ENCODE measurements at regions of chr14 and their contacts with region 1.

Region 1: DNA sequence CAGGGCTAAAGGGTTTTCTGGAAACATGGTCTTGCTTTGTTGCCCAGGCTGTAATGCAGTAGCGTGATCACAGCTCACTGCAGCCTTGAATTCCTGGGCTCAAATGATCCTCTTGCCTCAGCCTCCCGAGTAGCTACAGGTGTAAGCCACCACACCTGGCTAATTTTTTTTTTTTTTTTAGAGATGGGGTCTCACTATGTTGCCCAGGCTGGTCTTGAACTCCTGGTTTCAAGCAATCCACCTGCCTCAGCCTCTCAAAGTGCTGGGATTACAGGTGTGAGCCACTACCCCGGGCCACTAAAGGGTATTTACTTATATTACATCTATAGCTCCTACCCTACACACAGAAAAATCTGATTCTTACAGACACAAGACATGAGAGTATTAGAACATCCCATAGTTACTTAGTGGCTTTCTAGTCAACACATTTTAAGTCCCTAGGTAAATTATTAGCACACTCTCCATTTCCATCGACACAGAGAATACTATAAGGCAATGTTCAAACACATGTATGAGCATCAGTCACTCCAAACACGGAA is 6.2 kb upstream of the DCAF11 start:
- DNase-seq: no peak
- H3K4me3 ChIP-seq: no peak overlapping the region
- H3K4me3 Mint-ChIP-seq: peak overlapping the region in 2 of 7 donors; percentile 4 to 56
- H3K27ac ChIP-seq: no peak overlapping the region
- H3K27ac Mint-ChIP-seq: peak overlapping the region; percentile 79 to 97 (median 94)
- H3K4me1 ChIP-seq: peaks cover 15% of the 10 kb centered on the region
- H3K4me1 Mint-ChIP-seq: peaks cover 9 to 14% (median 10%) of the 10 kb centered on the region in 3 donors
- H3K27me3 ChIP-seq: no peaks in the 10 kb centered on the region
- H3K27me3 Mint-ChIP-seq: no peaks in the 10 kb centered on the region

Region 2: GRCh38 chr14:23776288-23776687 is 332.1 kb before region 1 on chr14:
- CTCF ChIA-PET with region 1: no interaction called
- POLR2A ChIA-PET with region 1: no interaction called
- DNase-seq: no peak
- H3K4me3 ChIP-seq: no peak overlapping the region
- H3K4me3 Mint-ChIP-seq: no peak overlapping the region
- H3K27ac ChIP-seq: no peak overlapping the region
- H3K27ac Mint-ChIP-seq: no peak overlapping the region
- H3K4me1 ChIP-seq: no peaks in the 10 kb centered on the region
- H3K4me1 Mint-ChIP-seq: no peaks in the 10 kb centered on the region
- H3K27me3 ChIP-seq: no peaks in the 10 kb centered on the region
- H3K27me3 Mint-ChIP-seq: peaks cover 17 to 61% of the 10 kb centered on the region in 2 donors

Region 3: DNA sequence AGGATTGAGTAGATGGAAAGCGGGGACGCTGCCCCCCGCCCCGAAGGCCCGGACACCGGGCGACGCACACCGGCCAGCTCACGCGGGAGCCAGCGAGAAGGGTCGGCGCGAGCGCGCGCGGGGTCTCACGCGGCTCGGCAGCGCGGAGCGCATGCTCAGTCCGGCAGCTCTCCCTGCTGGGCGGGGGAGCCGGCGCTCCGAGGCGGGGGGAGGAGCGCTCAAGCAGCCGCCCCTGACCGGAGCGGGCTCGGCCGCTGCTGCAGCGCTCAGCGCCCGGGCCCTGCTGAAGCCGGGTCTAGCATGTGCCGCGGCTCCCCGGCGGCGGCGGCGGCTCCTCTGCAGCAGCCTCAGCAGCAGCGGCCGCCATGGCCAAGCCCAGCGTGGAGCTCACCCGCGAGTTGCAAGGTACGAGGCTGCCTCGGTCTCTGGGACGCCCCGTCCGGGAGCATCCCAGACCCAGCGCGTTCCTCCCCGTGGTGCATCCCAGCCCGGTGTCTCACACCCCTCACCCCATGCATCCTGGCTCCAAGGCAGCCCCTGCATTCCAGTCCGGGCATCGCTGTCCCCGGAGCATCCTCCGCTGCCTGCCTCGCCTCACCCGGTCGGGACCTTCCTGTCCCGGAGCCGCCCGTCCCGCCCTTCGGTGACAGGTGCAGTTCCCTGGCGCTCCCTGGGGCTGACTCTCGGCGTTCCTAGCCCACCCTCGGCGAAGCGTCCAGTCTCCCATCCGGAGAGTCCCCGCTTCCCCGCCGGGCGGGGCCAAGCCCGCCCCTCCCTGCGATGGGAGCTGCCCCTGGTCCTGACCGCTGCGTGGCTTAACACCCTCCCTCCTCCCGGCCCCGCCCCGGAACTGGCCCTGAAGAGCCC is 56.4 kb before region 1 on chr14 and contains the start of gene CARMIL3:
- CTCF ChIA-PET with region 1: interaction called, 114 read pairs
- POLR2A ChIA-PET with region 1: interaction called, 5 read pairs
- DNase-seq: peak; percentile 49 to 73 (median 56)
- H3K4me3 ChIP-seq: peak within 1 kb of the TSS; percentile 66
- H3K4me3 Mint-ChIP-seq: peak within 1 kb of the TSS; percentile 78 to 90 (median 84)
- H3K27ac ChIP-seq: no peak within 1 kb of the TSS
- H3K27ac Mint-ChIP-seq: peak within 1 kb of the TSS in 6 of 8 donors; percentile 16 to 94 (median 58)
- H3K4me1 ChIP-seq: peaks cover 9% of the 10 kb centered on the region
- H3K4me1 Mint-ChIP-seq: peaks cover 15 to 20% (median 18%) of the 10 kb centered on the region in 3 donors
- H3K27me3 ChIP-seq: no peaks in the 10 kb centered on the region
- H3K27me3 Mint-ChIP-seq: peaks cover 0 to 8% of the 10 kb centered on the region in 2 donors
- total RNA-seq, gene CARMIL3: 1.2 to 1.5 TPM

Region 4: GRCh38 chr14:24080888-24081738 is 27.3 kb before region 1 on chr14:
- CTCF ChIA-PET with region 1: interaction called, 36 read pairs
- POLR2A ChIA-PET with region 1: interaction called, 28 read pairs
- DNase-seq: peak; percentile 36 to 80 (median 64)
- H3K4me3 ChIP-seq: peak overlapping the region; percentile 62
- H3K4me3 Mint-ChIP-seq: peak overlapping the region; percentile 85 to 93 (median 88)
- H3K27ac ChIP-seq: peak overlapping the region; percentile 61
- H3K27ac Mint-ChIP-seq: peak overlapping the region; percentile 53 to 92 (median 82)
- H3K4me1 ChIP-seq: peaks cover 9% of the 10 kb centered on the region
- H3K4me1 Mint-ChIP-seq: peaks cover 15 to 18% (median 16%) of the 10 kb centered on the region in 3 donors
- H3K27me3 ChIP-seq: no peaks in the 10 kb centered on the region
- H3K27me3 Mint-ChIP-seq: peaks cover 0 to 2% of the 10 kb centered on the region in 2 donors

Region 5: GRCh38 chr14:24123508-24124417 is 15.4 kb after region 1 on chr14:
- CTCF ChIA-PET with region 1: interaction called, 13 read pairs
- POLR2A ChIA-PET with region 1: no interaction called
- DNase-seq: no peak
- H3K4me3 ChIP-seq: no peak overlapping the region
- H3K4me3 Mint-ChIP-seq: peak overlapping the region in 1 of 7 donors; percentile 35
- H3K27ac ChIP-seq: no peak overlapping the region
- H3K27ac Mint-ChIP-seq: peak overlapping the region in 4 of 8 donors; percentile 29 to 46 (median 34)
- H3K4me1 ChIP-seq: no peaks in the 10 kb centered on the region
- H3K4me1 Mint-ChIP-seq: peaks cover 0 to under 1% (median 0%) of the 10 kb centered on the region in 3 donors
- H3K27me3 ChIP-seq: no peaks in the 10 kb centered on the region
- H3K27me3 Mint-ChIP-seq: no peaks in the 10 kb centered on the region

Region 6: GRCh38 chr14:24141097-24141880 is 32.9 kb after region 1 on chr14 and contains the start of gene EMC9:
- CTCF ChIA-PET with region 1: interaction called, 28 read pairs
- POLR2A ChIA-PET with region 1: interaction called, 58 read pairs
- DNase-seq: peak; percentile 98 to 100 (median 99)
- H3K4me3 ChIP-seq: peak within 1 kb of the TSS; percentile 85
- H3K4me3 Mint-ChIP-seq: peak within 1 kb of the TSS; percentile 87 to 98 (median 91)
- H3K27ac ChIP-seq: peak within 1 kb of the TSS; percentile 68
- H3K27ac Mint-ChIP-seq: peak within 1 kb of the TSS; percentile 80 to 98 (median 90)
- H3K4me1 ChIP-seq: peaks cover 56% of the 10 kb centered on the region
- H3K4me1 Mint-ChIP-seq: peaks cover 65 to 86% (median 79%) of the 10 kb centered on the region in 3 donors
- H3K27me3 ChIP-seq: no peaks in the 10 kb centered on the region
- H3K27me3 Mint-ChIP-seq: no peaks in the 10 kb centered on the region
- total RNA-seq, gene EMC9: 28.1 to 30.2 TPM